ENCODE measurements at regions of chr5 and their contacts with region 1.

Region 1: GRCh38 chr5:1523771-1524480 is at the start of gene LPCAT1:
- DNase-seq: peak; percentile 89
- H3K4me3 ChIP-seq: peak within 1 kb of the TSS; percentile 82 to 87 (median 84)
- H3K27ac ChIP-seq: peak within 1 kb of the TSS; percentile 86 to 93 (median 92)
- H3K4me1 ChIP-seq: peaks cover 0 to 25% (median 21%) of the 10 kb centered on the region in 4 donors
- H3K27me3 ChIP-seq: no peaks in the 10 kb centered on the region
- CTCF ChIP-seq: peak in 1 of 4 experiments; percentile 22
- EP300 ChIP-seq: no peak
- POLR2A ChIP-seq: no peak
- total RNA-seq, gene LPCAT1: 20.6 to 24.3 (median 22.3) TPM

Region 2: GRCh38 chr5:1344975-1345838 is 178.7 kb before region 1 on chr5 and contains the start of gene CLPTM1L:
- intact Hi-C with region 1: loop called (anchors 10 kb)
- DNase-seq: peak; percentile 92
- H3K4me3 ChIP-seq: peak within 1 kb of the TSS; percentile 71 to 99 (median 86)
- H3K27ac ChIP-seq: peak within 1 kb of the TSS; percentile 83 to 94 (median 90)
- H3K4me1 ChIP-seq: peaks cover 0 to 33% (median 23%) of the 10 kb centered on the region in 4 donors
- H3K27me3 ChIP-seq: no peaks in the 10 kb centered on the region
- CTCF ChIP-seq: no peak
- EP300 ChIP-seq: no peak
- POLR2A ChIP-seq: peak; percentile 62 to 63
- total RNA-seq, gene CLPTM1L: 49.5 to 67.8 (median 58.9) TPM

Region 3: GRCh38 chr5:1568201-1568979 is 44.5 kb after region 1 on chr5:
- intact Hi-C with region 1: loop called (anchors 2 kb)
- DNase-seq: peak; percentile 81
- H3K4me3 ChIP-seq: no peak overlapping the region
- H3K27ac ChIP-seq: peak overlapping the region; percentile 64 to 75 (median 72)
- H3K4me1 ChIP-seq: peaks cover 0 to 19% (median 17%) of the 10 kb centered on the region in 4 donors
- H3K27me3 ChIP-seq: no peaks in the 10 kb centered on the region
- CTCF ChIP-seq: no peak
- EP300 ChIP-seq: peak in 2 of 4 donors; percentile 34 to 52
- POLR2A ChIP-seq: no peak

Region 4: DNA sequence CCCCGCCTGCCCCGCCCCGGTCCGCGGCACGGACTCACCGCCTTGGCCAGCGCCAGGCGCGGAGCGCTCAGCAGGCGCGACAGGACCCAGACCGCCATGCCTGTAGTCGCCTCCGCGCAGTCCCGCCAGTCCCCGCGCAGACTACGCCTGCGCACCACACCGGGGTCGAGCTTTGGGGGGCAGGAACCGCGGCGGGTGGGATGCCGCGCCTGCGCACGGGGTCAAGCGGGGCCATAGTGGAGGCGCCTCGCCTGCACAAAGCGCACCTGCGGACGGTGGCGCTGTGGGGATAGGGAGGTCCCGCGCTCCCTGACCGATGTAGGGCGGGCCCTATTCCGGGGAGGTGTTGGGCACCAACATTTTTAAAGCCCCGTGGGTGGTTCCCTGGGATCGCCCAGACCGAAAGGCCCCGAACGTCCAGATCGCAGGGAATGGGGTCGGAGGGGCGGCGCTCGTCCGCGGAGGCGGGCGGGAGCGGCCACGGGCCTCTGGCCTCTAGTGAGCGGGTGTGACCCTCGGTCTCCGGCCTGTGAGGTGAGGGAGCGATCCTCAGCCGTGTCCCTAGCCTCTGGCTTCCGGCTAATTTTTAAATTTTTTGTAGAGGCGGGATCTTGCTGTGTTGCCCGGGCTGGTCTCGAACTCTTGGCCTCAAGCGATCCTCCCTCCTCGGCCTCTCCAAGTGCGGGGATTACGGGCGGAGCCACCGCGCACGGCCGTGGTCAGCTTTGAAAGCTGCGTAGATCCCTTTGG is 70.6 kb after region 1 on chr5:
- intact Hi-C with region 1: loop called (anchors 5 kb)
- DNase-seq: peak; percentile 89
- H3K4me3 ChIP-seq: peak overlapping the region; percentile 35 to 65 (median 64)
- H3K27ac ChIP-seq: peak overlapping the region; percentile 76 to 79 (median 78)
- H3K4me1 ChIP-seq: peaks cover 0 to 8% (median 2%) of the 10 kb centered on the region in 4 donors
- H3K27me3 ChIP-seq: no peaks in the 10 kb centered on the region
- CTCF ChIP-seq: peak in 3 of 4 experiments; percentile 15 to 28 (median 26)
- EP300 ChIP-seq: no peak
- POLR2A ChIP-seq: no peak

Region 5: DNA sequence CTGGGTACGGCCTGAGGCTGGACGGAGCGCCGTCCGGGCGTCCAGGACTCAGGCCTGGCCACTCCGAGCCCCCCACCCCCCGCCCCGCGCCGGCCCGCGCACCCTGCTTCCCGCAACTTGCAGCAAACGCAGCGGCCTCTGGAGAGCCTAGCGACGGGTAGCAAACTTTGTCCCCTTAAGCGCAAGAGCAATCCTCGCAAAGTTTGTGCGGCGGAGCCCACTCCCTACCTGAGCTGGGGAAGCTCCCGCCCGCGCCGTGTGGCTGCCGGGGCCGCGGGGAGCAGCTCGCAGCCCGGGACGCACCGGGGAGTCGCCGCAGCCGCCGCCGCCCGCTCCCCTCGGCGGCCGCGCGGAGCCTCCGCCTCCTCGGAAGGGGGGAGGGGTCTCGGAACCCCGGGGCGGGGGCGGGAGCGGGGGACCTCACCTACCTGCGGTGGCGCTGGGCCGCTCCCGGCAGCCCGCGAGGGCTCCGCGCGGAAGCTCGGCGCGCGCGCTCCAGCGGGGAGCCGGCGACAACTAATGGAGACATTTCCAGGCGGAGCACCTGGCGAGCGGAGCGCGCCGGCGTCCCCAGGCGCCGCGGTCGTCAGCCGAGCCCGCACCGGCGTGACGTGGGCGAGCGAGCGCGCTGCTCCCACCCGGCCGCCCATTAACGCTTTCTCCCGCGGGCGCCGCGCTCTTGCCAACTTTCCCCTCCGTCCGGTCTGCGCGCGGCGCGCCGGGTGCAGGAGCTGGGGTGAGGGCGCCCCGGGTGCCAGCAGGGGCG is 362.9 kb after region 1 on chr5:
- intact Hi-C with region 1: no loop called
- DNase-seq: no peak
- H3K4me3 ChIP-seq: no peak overlapping the region
- H3K27ac ChIP-seq: no peak overlapping the region
- H3K4me1 ChIP-seq: peaks cover 0 to 41% (median 31%) of the 10 kb centered on the region in 4 donors
- H3K27me3 ChIP-seq: peaks cover 53 to 92% (median 69%) of the 10 kb centered on the region in 3 donors
- CTCF ChIP-seq: no peak
- EP300 ChIP-seq: no peak
- POLR2A ChIP-seq: no peak